KBM-7 (cell line): ENCODE measurements at regions of chr17 and their contacts with region 1.

Region 1: DNA sequence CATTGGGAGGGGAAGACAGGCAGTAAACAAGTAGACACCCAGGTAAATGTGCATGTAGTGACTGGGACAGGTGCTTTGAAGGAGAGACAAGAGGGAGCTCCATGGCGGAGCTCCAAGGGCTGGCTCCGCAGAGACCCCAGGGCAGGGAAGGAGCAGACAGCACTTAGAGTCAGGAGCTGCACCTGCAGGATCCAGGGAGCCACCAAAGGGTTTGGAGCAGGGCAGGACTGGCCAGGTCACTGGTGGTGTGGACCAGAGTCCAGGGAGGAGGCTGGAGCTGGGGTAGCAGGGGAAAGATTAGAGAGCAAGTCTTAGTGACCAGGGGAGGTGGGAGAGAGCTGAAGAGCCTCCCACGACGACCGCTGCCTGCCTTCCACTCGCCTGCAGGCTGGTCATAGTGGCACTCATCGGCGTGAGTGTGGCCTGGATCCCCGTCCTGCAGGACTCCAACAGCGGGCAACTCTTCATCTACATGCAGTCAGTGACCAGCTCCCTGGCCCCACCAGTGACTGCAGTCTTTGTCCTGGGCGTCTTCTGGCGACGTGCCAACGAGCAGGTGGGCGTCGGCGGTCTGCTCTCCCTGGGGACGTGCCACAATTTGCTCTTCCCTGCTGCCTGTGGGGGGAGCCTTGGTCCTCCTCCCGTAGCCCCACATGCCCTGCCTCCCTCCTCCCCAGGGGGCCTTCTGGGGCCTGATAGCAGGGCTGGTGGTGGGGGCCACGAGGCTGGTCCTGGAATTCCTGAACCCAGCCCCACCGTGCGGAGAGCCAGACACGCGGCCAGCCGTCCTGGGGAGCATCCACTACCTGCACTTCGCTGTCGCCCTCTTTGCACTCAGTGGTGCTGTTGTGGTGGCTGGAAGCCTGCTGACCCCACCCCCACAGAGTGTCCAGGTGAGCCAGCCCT is 14.7 kb upstream of the FAM83G start:
- DNase-seq: no peak

Region 2: GRCh38 chr17:18921912-18922451 is 97.3 kb before region 1 on chr17:
- in situ Hi-C with region 1: no loop called
- DNase-seq: peak; percentile 44

Region 3: DNA sequence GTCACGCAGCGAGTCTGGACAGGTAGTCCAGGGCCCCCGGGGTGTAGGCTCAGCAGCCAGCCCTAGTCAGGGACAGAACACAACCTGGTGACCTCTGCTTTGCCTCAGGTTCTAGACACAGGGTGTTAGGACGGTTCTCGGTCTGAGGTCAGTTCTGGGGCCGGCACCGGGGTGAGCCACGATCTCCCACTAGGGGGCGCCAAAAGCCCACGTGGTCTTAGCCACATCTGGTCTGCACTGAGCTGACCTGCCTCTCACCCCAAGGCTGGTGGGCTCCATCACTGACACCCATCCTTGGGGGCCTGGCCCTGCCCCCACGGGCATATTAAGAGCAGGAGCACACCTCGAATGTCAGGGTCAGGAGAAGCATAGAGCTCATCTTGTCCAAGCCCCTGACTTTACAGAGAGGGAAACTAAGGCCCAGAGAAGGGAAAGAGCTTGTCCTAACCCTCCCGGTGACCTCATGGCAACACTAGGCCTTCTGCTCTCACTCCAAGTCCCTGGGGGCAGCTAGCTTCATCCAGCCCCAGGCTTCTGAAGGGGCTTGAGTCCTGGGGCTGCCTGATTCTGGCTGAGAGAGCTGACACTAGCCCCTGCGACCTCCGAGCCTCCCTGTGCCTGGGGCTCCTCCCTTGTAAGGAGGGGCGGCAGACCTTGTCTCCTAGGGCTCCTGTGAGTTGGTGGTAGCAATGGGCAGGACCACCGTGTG is 58.3 kb before region 1 on chr17:
- in situ Hi-C with region 1: loop called (anchors 10 kb)
- DNase-seq: peak; percentile 76